Endothelial cell of umbilical vein (primary cell): ENCODE measurements at regions of chr4 and their contacts with region 1.

Region 1: DNA sequence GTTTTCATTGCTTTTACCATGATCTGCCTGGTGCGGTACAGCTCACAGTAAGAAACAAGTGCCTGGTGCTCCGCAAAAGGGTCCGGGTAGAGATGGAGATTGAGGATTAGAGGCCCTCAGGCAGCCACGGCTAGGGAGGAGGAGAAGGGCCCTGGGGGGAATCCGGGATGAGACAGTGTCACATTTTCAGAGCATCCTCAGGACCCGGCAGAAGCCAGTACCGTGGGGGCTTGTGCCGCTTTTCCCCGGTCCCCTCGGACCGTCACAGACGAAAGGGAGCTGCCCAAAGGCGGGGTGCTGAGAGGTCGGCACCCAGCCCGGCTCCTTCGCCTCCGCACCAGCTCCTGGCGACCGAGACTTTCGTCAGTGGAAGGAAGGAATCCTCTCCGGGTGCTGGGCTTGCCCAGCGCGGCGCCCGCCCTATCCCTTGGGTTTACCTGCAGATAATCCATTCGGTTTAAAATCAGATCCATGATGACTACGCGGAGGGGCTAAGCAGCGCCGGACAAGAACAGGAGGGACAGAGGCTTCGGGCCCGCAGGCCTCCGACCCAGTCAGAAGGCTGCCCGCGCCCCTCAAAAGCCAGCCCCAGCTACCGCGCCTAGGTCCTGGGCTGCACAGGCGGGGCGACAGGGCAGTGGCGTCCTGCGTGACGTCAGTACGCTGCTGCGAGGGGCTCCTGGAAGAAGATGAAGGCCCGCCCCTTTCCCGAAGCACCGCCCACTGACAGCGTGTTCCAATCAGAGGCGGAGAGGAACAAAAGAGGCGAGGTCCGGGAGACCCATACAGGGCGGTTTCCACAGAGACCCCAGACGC is at the start of gene BBS7:
- DNase-seq: peak; percentile 99
- H3K4me3 ChIP-seq: peak within 1 kb of the TSS; percentile 76 to 84 (median 80)
- H3K27ac ChIP-seq: peak within 1 kb of the TSS; percentile 58
- H3K4me1 ChIP-seq: peaks cover 10% of the 10 kb centered on the region
- H3K27me3 ChIP-seq: no peaks in the 10 kb centered on the region
- CTCF ChIP-seq: no peak
- POLR2A ChIP-seq: peak; percentile 96
- total RNA-seq, gene BBS7: 20.0 and 22.2 TPM in 2 replicates

Region 2: DNA sequence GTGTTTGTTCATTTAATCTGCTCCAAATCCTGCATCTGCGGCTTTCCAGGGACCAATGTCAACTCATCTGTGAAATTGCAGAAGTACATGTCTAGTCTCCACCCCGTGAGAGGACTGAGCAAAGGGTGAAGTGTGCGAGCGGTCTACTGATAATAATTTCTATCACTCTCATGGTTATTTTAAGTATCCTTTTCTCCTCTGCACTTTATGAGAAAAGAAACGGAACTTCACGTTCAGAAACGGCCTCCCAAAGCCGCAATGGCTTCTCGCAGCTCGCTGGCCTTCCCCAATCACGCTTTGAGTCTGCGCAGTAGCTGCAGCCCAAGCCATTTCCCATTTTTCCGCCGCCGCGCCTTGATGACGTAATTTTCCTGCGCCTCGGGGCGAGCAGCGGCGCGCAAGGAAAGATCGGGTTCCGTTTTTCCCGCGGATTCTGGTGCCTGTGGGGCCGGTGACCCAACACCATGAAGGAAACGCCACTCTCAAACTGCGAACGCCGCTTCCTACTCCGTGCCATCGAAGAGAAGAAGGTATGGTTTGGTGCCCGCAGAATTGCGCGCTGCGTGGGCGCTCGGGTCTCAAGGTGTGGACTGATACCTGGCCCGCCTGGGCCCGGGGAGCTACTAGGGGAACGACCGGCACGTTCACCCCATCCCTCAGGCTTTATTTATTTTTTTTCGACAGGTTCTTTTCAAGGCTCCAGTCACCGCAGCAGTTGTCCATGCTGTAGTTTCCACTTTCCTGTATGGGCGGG is 68.9 kb before region 1 on chr4 and contains the start of gene EXOSC9:
- CTCF ChIA-PET with region 1: no interaction called
- POLR2A ChIA-PET with region 1: no interaction called
- dilution Hi-C with region 1: no loop called
- intact Hi-C with region 1: loop called (anchors 1 kb)
- DNase-seq: peak; percentile 96
- H3K4me3 ChIP-seq: peak within 1 kb of the TSS; percentile 84 to 93 (median 84)
- H3K27ac ChIP-seq: peak within 1 kb of the TSS; percentile 80
- H3K4me1 ChIP-seq: peaks cover 11% of the 10 kb centered on the region
- H3K27me3 ChIP-seq: no peaks in the 10 kb centered on the region
- CTCF ChIP-seq: no peak
- POLR2A ChIP-seq: peak; percentile 91
- total RNA-seq, gene EXOSC9: 46.3 and 47.2 TPM in 2 replicates